PC-3 (cell line): ENCODE measurements at regions of chr10 and their contacts with region 1.

Region 1: DNA sequence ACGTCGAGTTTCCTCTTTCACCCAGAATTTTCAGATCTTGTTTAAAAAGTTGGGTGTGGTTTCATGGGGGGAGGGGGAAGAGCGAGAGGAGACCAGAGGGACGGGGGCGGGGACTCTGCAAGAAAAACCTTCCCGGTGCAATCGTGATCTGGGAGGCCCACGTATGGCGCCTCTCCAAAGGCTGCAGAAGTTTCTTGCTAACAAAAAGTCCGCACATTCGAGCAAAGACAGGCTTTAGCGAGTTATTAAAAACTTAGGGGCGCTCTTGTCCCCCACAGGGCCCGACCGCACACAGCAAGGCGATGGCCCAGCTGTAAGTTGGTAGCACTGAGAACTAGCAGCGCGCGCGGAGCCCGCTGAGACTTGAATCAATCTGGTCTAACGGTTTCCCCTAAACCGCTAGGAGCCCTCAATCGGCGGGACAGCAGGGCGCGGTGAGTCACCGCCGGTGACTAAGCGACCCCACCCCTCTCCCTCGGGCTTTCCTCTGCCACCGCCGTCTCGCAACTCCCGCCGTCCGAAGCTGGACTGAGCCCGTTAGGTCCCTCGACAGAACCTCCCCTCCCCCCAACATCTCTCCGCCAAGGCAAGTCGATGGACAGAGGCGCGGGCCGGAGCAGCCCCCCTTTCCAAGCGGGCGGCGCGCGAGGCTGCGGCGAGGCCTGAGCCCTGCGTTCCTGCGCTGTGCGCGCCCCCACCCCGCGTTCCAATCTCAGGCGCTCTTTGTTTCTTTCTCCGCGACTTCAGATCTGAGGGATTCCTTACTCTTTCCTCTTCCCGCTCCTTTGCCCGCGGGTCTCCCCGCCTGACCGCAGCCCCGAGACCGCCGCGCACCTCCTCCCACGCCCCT is at the start of gene VIM:
- DNase-seq: peak; percentile 82
- ATAC-seq: peak; percentile 66
- H3K4me3 ChIP-seq: peak within 1 kb of the TSS; percentile 87
- H3K27ac ChIP-seq: peak within 1 kb of the TSS; percentile 92
- H3K4me1 ChIP-seq: peaks cover 10% of the 10 kb centered on the region
- H3K27me3 ChIP-seq: no peaks in the 10 kb centered on the region
- CTCF ChIP-seq: no peak
- total RNA-seq, gene VIM: 469 and 506 TPM in 2 replicates

Region 2: DNA sequence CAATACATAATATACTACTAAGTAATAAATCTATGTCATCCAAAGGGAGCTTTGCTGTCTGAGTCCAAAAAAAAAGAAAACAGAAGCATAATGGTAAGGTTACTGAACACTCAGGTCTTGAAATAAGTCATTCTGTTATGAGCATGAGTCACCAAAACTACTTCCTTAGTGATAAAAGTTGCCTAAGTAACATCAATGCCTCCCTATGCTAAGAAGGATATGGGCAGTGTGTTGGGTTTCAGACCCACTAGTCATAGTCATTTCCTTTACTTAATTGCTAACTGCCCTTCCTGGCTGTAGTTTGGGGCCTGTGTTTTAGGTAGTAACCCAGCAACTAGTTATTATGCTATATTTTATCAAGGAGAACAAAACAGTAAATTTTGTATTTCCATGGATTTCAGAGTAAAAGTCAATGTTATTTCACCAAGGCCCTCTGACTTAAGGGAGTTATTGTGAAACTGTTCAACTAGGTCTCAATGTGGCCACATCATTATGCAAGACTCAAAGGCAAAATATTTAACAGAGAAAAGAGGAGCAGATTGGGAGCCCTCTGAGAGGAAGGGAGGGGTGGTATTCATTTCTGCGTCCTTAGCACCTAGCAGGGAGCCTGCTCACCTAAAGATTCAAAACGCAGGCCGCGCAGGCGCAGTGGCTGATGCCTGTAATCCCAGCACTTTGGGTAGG is 12.0 kb before region 1 on chr10:
- CTCF ChIA-PET with region 1: no interaction called
- POLR2A ChIA-PET with region 1: interaction called, 9 read pairs
- intact Hi-C with region 1: loop called (anchors 1 kb)
- DNase-seq: peak; percentile 85
- ATAC-seq: peak; percentile 84
- H3K4me3 ChIP-seq: peak overlapping the region; percentile 51; the same call in 1 of the 2 replicates
- H3K27ac ChIP-seq: peak overlapping the region; percentile 99
- H3K4me1 ChIP-seq: peaks cover 53% of the 10 kb centered on the region
- H3K27me3 ChIP-seq: no peaks in the 10 kb centered on the region
- CTCF ChIP-seq: no peak